ENCODE measurements at regions of chr4 and their contacts with region 1.

Region 1: DNA sequence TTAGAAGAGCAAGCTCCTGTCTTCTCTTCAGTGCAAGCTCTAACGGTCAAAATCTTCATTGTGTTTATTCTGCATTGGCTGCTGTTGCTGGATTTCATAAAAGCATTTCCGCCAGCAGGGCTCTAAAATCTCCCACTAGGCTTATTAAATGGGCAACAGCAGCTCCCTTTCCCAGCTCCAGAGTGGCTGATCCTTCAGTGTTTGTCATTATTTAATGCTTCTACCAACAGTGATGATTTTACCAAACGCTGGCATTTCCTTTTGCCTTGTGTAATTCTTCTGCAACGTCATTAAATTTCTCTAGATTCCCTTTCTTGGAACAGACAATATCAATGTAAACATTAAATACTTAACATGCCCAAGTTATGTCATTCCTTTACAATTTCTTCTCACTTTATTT is 20.1 kb downstream of the SLC7A11 start:
- DNase-seq: no peak
- H3K4me3 ChIP-seq: no peak overlapping the region
- H3K27ac ChIP-seq: no peak overlapping the region
- H3K4me1 ChIP-seq: peaks cover 34% of the 10 kb centered on the region
- CTCF ChIP-seq: no peak

Region 2: GRCh38 chr4:138190452-138190858 is 31.6 kb before region 1 on chr4:
- CTCF ChIA-PET with region 1: interaction called, 3 read pairs
- POLR2A ChIA-PET with region 1: interaction called, 4 read pairs
- intact Hi-C with region 1: loop called (anchors 2 kb)
- DNase-seq: peak; percentile 84
- H3K4me3 ChIP-seq: peak overlapping the region; percentile 47
- H3K27ac ChIP-seq: peak overlapping the region; percentile 93
- H3K4me1 ChIP-seq: peaks cover 46% of the 10 kb centered on the region
- CTCF ChIP-seq: no peak

Region 3: GRCh38 chr4:138199568-138200235 is 22.3 kb before region 1 on chr4:
- CTCF ChIA-PET with region 1: no interaction called
- POLR2A ChIA-PET with region 1: interaction called, 11 read pairs
- intact Hi-C with region 1: no loop called
- DNase-seq: no peak
- H3K4me3 ChIP-seq: no peak overlapping the region
- H3K27ac ChIP-seq: no peak overlapping the region
- H3K4me1 ChIP-seq: no peaks in the 10 kb centered on the region
- CTCF ChIP-seq: no peak

Region 4: DNA sequence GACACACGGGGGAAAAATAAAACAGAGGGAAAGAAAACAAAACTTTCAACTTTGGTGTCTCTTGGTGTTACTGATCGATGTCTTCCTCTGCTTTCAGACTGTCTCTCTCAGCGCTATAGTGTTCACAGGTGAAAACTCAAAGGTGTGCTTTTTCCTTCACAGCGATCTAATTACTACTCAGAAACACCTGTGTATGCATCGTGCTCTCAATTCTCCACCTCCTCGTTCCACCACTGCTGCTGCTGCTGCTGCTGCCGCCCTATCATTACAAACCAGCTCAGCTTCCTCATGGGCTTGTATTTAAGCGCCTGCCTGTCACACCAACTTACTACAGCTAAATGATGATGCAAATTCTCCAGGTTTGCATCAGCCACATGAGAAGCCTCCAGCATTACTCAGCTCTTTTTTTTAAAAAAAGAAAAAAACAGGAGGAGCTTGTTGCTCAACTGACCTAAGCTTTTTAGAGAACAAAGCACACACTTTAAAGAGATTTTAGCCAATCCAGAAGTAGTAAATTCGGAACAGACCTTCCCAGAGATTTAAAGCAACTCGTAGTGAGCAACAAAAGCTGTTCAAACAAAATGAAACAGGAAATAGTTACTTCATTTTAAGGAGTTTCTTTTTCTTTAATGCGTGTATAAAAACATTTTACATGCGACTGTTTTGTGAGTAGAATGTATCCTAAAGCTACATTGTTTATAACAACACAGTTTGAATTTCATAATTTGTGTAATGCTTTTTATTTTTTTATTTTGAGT is 20.2 kb after region 1 on chr4 and contains the start of gene SLC7A11:
- CTCF ChIA-PET with region 1: no interaction called
- POLR2A ChIA-PET with region 1: interaction called, 8 read pairs
- intact Hi-C with region 1: loop called (anchors 2 kb)
- DNase-seq: peak; percentile 97
- H3K4me3 ChIP-seq: peak within 1 kb of the TSS; percentile 76
- H3K27ac ChIP-seq: peak within 1 kb of the TSS; percentile 91
- H3K4me1 ChIP-seq: peaks cover 30% of the 10 kb centered on the region
- CTCF ChIP-seq: no peak
- total RNA-seq, gene SLC7A11: 5.2 and 5.7 TPM in 2 replicates

Region 5: GRCh38 chr4:138308405-138308804 is 86.4 kb after region 1 on chr4:
- CTCF ChIA-PET with region 1: no interaction called
- POLR2A ChIA-PET with region 1: no interaction called
- intact Hi-C with region 1: no loop called
- DNase-seq: no peak
- H3K4me3 ChIP-seq: no peak overlapping the region
- H3K27ac ChIP-seq: no peak overlapping the region
- H3K4me1 ChIP-seq: no peaks in the 10 kb centered on the region
- CTCF ChIP-seq: no peak

Measured in OCI-LY7 (cell line).